ENCODE measurements at regions of chr9 and their contacts with region 1.

Region 1: GRCh38 chr9:136170006-136170901 is 34.7 kb downstream of the LHX3 start:
- DNase-seq: no peak
- ATAC-seq: peak; percentile 72
- H3K4me3 ChIP-seq: peak overlapping the region; percentile 8 to 62 (median 25); a peak in 5 of 6 replicates
- H3K27ac ChIP-seq: no peak overlapping the region
- H3K4me1 ChIP-seq: peaks cover 47% of the 10 kb centered on the region
- H3K27me3 ChIP-seq: peaks cover under 1 to 3% of the 10 kb centered on the region in 2 experiments; a peak in 4 of 5 replicates
- CTCF ChIP-seq: peak; percentile 81
- EP300 ChIP-seq: no peak
- POLR2A ChIP-seq: no peak
- RAD21 ChIP-seq: peak; percentile 69

Region 2: GRCh38 chr9:136222906-136223285 is 52.6 kb after region 1 on chr9:
- CTCF ChIA-PET with region 1: interaction called, 7 read pairs
- POLR2A ChIA-PET with region 1: no interaction called
- in situ Hi-C with region 1: no loop called
- intact Hi-C with region 1: loop called (anchors 2 kb)
- DNase-seq: no peak
- ATAC-seq: no peak
- H3K4me3 ChIP-seq: no peak overlapping the region
- H3K27ac ChIP-seq: no peak overlapping the region
- H3K4me1 ChIP-seq: no peaks in the 10 kb centered on the region
- H3K27me3 ChIP-seq: no peaks in the 10 kb centered on the region
- CTCF ChIP-seq: no peak
- EP300 ChIP-seq: no peak
- POLR2A ChIP-seq: no peak
- RAD21 ChIP-seq: no peak

Region 3: GRCh38 chr9:136283291-136284235 is 113.3 kb after region 1 on chr9:
- CTCF ChIA-PET with region 1: interaction called, 6 read pairs
- POLR2A ChIA-PET with region 1: no interaction called
- in situ Hi-C with region 1: loop called (anchors 10 kb)
- intact Hi-C with region 1: no loop called
- DNase-seq: peak; percentile 33
- ATAC-seq: peak; percentile 90
- H3K4me3 ChIP-seq: no peak overlapping the region
- H3K27ac ChIP-seq: no peak overlapping the region
- H3K4me1 ChIP-seq: no peaks in the 10 kb centered on the region
- H3K27me3 ChIP-seq: peaks cover 12 to 83% of the 10 kb centered on the region in 2 experiments
- CTCF ChIP-seq: peak; percentile 96
- EP300 ChIP-seq: no peak
- POLR2A ChIP-seq: no peak
- RAD21 ChIP-seq: peak; percentile 81

Measured in HepG2 (cell line).